ENCODE measurements at regions of chr1 and their contacts with region 1.

Region 1: DNA sequence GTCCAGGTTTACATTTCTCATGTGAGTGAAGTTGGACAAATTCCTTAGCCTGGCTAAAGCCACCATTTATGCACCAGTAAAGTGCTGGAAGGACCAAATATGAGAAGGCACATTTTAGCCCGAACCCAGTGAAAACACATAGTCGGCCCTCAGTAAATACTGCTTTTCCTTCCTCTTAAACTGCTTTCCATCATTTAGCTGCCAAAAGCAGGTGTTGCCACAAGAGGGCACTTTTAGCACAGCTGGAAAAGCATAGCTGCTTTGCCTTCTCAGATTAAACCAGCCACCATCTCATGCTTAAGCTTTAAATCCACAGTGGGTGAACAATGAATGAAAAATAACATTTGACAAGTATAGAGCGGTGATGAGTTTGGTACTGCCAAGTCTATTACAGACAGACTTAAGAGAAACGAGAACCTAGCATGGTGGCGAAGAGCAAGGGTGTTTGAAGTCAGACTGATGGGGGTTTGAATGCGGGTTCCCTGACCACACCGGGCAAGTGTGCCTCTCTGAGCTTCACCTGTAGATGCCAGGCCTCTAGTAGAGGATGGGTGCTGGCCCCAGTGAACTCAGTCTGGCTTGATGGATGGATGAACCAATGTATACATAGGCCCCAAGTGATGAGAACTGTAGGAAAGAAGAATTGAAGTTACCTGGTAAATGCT is 57.8 kb downstream of the SLC35D1 start:
- DNase-seq: no peak
- H3K4me3 ChIP-seq: no peak overlapping the region
- H3K27ac ChIP-seq: no peak overlapping the region
- H3K4me1 ChIP-seq: no peaks in the 10 kb centered on the region
- H3K27me3 ChIP-seq: no peaks in the 10 kb centered on the region
- CTCF ChIP-seq: peak; percentile 54 to 80 (median 68)
- POLR2A ChIP-seq: no peak

Region 2: DNA sequence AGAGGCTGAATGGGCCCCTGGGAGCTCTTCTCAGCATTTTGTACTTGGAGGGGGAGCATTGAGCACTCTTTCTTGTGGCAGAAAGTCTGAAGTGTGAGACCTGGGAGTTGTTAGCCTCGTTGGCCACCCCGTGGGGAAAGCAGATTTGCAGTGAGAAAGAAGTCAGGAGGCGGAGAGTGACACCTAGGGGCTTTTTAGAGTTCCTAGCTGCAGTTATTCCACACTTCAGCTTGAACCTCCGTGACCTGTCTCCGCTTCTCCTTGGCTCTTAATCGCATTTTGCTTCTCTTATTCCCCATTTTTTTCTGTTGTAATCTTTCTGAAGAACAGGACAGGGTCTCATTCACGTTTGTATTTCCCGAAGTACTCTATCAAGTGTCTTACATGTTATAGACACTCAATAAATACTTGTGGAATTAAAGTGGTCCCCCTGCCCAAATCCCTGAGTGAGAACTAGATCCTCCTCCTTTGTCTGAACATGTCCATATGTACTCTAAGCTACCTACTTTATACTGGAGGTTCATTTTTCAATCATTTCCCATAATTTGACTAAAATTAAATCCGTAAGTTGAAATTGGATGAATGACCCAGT is 153.1 kb after region 1 on chr1:
- intact Hi-C with region 1: loop called (anchors 5 kb)
- DNase-seq: peak; percentile 14
- H3K4me3 ChIP-seq: peak overlapping the region in 1 of 4 donors; percentile 2
- H3K27ac ChIP-seq: no peak overlapping the region
- H3K4me1 ChIP-seq: peaks cover 0 to 11% (median 4%) of the 10 kb centered on the region in 3 donors
- H3K27me3 ChIP-seq: peaks cover 0 to 4% (median 0%) of the 10 kb centered on the region in 4 donors
- CTCF ChIP-seq: peak; percentile 48 to 81 (median 70)
- POLR2A ChIP-seq: no peak

Region 3: DNA sequence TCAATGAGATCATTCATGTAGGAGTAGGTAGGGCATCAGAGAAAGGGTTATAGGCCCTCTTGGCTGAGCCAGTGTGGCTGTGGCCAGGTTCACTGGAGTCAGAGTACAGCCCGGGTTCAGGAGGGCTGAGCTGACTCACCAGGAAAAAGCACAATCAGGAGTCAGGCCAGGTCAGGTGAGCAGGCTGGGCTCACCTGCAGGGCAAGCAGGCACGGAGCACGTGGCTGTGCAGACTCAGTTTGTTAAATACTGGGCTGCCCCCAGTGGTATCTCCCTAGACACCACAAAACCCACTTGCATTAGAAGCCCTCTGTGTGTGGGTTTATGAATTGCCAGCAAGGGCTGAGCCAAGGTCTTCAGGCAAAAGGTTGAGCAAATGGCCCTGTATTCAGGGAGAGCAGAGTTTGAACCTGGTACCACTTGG is 556.2 kb after region 1 on chr1:
- intact Hi-C with region 1: no loop called
- DNase-seq: no peak
- H3K4me3 ChIP-seq: no peak overlapping the region
- H3K27ac ChIP-seq: peak overlapping the region in 2 of 4 donors; percentile 53 to 62
- H3K4me1 ChIP-seq: peaks cover 3 to 35% (median 5%) of the 10 kb centered on the region in 3 donors
- H3K27me3 ChIP-seq: no peaks in the 10 kb centered on the region
- CTCF ChIP-seq: no peak
- POLR2A ChIP-seq: no peak